K562 (cell line): ENCODE measurements at regions of chr7 and their contacts with region 1.

Region 1: GRCh38 chr7:149005241-149006050 is 22.9 kb downstream of the PDIA4 start:
- DNase-seq: peak; percentile 81 to 92 (median 86)
- ATAC-seq: peak; percentile 94
- H3K4me3 ChIP-seq: no peak overlapping the region
- H3K27ac ChIP-seq: no peak overlapping the region
- H3K4me1 ChIP-seq: peaks cover 0 to 6% of the 10 kb centered on the region in 2 experiments; a peak in 1 of 5 replicates
- H3K27me3 ChIP-seq: no peaks in the 10 kb centered on the region
- CTCF ChIP-seq: peak; percentile 89 to 98 (median 91)
- EP300 ChIP-seq: no peak
- POLR2A ChIP-seq: no peak
- RAD21 ChIP-seq: peak; percentile 75 to 78

Region 2: DNA sequence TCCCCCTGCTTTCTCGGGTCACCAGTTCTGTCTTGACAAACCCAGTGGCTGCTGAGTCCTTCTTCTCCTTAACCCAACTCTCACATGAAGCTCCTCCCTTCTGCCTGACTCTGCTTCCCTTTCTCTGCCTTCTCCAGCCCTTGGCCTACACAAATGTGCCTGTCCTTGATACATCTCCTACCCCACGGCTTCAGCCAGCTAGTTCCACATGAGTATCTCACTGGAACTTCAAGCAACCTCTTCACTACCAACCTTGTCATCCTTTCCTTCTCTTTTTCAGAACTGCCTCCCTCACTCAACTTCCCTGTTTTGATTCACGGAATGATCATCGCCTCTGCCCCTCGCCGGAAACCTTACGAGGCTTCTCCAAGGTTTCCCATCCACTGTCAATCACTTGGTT is 33.1 kb before region 1 on chr7:
- CTCF ChIA-PET with region 1: no interaction called
- POLR2A ChIA-PET with region 1: no interaction called
- in situ Hi-C with region 1: no loop called
- intact Hi-C with region 1: no loop called
- DNase-seq: no peak
- ATAC-seq: no peak
- H3K4me3 ChIP-seq: no peak overlapping the region
- H3K27ac ChIP-seq: no peak overlapping the region
- H3K4me1 ChIP-seq: peaks cover 0 to 10% of the 10 kb centered on the region in 2 experiments; a peak in 3 of 5 replicates
- H3K27me3 ChIP-seq: no peaks in the 10 kb centered on the region
- CTCF ChIP-seq: no peak
- EP300 ChIP-seq: no peak
- POLR2A ChIP-seq: no peak
- RAD21 ChIP-seq: no peak

Region 3: GRCh38 chr7:148994601-148995000 is 10.8 kb before region 1 on chr7:
- CTCF ChIA-PET with region 1: no interaction called
- POLR2A ChIA-PET with region 1: interaction called, 10 read pairs
- in situ Hi-C with region 1: no loop called
- intact Hi-C with region 1: no loop called
- DNase-seq: no peak
- ATAC-seq: no peak
- H3K4me3 ChIP-seq: no peak overlapping the region
- H3K27ac ChIP-seq: no peak overlapping the region
- H3K4me1 ChIP-seq: peaks cover 0 to 6% of the 10 kb centered on the region in 2 experiments; a peak in 1 of 5 replicates
- H3K27me3 ChIP-seq: peaks cover 2 to 4% of the 10 kb centered on the region in 2 experiments; a peak in 1 of 5 replicates
- CTCF ChIP-seq: no peak
- EP300 ChIP-seq: no peak
- POLR2A ChIP-seq: no peak
- RAD21 ChIP-seq: no peak

Region 4: DNA sequence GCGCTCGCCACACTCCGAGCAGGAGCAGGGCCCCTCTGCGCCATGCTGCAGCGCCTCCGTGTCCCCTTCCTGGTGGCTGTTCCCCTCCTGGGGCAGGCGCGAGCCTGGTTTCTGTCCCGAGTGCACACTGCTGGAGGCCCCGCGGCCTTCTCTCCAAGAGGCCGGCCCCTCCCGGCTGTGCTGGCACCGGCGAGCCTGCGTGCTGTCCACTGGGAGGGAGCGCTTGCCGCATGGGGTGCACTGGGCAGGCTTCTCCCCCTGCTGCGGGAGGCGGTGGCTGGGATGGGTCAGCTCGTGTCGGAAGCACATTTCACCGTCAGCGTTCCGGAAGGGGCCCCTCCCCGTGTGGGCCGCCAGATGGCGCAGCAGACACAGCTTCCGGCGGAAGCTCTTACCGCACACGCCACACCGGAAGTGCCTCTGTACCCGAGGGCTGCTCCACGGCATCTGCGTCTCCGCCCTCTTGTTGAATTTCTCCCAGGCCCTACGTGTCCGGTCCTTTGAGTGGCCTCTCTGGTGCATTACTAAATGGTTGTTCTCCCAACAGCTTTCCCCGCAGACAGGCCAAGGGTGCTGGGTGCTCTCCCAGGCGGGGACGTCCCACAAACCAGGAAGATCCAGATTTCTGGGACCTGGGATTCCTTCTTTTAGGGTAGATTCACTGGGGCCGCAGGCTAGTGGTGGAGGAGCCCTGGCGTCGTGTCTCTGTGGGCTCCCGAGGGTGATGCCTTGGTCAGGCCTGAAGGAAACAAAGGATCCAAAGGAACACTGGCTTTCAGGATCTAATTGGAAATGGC is 66.4 kb after region 1 on chr7:
- CTCF ChIA-PET with region 1: no interaction called
- POLR2A ChIA-PET with region 1: no interaction called
- in situ Hi-C with region 1: loop called (anchors 5 kb)
- intact Hi-C with region 1: no loop called
- DNase-seq: peak in 3 of 4 experiments; percentile 24 to 48 (median 33)
- ATAC-seq: peak; percentile 74
- H3K4me3 ChIP-seq: no peak overlapping the region
- H3K27ac ChIP-seq: no peak overlapping the region
- H3K4me1 ChIP-seq: peaks cover 0 to 12% of the 10 kb centered on the region in 2 experiments; a peak in 1 of 5 replicates
- H3K27me3 ChIP-seq: no peaks in the 10 kb centered on the region
- CTCF ChIP-seq: peak; percentile 42 to 50 (median 50); a peak in 5 of 6 replicates
- EP300 ChIP-seq: no peak
- POLR2A ChIP-seq: no peak
- RAD21 ChIP-seq: peak in 1 of 2 experiments; percentile 48; a peak in 2 of 4 replicates